CD4-positive, alpha-beta memory T cell (primary cell): ENCODE measurements at regions of chr1 and their contacts with region 1.

Region 1: DNA sequence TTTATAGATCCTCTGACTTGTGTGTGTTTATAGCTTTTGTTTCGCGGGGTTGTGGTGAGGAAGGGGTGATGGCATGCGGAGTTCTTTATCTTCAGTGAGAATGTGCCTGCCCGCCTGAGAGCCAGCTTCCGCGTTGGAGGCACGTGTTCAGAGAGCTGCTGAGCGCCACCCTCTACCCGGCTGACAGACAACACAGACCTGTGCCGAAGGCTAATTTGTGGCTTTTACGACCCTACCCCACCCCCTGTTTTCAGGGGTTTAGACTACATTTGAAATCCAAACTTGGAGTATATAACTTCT is 14.4 kb upstream of the CD101 start:
- DNase-seq: peak; percentile 64 to 78 (median 74)
- H3K4me3 ChIP-seq: peak overlapping the region; percentile 44 to 59
- H3K4me3 Mint-ChIP-seq: peak overlapping the region; percentile 83 to 94 (median 88)
- H3K27ac ChIP-seq: peak overlapping the region; percentile 51
- H3K27ac Mint-ChIP-seq: peak overlapping the region; percentile 74 to 98 (median 95)
- H3K4me1 ChIP-seq: peaks cover 34% of the 10 kb centered on the region
- H3K4me1 Mint-ChIP-seq: peaks cover 25 to 42% (median 31%) of the 10 kb centered on the region in 4 donors
- H3K27me3 ChIP-seq: no peaks in the 10 kb centered on the region
- H3K27me3 Mint-ChIP-seq: no peaks in the 10 kb centered on the region

Region 2: DNA sequence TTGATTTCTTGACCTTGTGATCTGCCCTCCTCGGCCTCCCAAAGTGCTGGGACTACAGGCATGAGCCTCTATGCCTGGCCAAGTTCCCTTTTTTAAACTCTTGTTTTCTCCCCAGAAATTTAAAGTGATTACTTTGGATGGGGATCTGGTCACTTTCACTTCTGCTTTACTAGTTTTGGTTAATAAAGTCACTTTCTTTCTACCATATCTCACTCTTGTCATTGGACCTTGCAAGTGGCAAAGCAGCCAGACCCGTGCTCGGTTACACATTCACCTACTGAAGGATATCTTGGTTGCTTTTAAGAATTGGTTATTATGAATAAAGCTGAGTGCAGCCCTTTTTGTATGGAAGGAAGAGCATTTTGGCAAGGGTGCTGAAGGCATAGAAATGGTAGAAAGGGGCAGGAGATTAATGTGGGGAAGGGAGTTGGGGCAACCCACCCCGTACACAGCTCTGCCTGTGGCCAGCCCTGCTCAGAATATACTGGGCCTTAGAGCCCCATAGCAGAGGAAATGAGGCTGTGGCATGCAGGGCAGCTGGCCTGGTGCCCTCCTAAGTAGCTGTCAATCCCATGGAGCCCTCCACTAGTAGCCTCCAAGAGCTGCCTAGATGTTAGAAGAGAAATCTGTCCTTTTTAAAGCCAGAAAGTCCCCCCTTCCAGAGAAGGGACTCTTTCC is 192.3 kb before region 1 on chr1:
- CTCF ChIA-PET with region 1: no interaction called
- POLR2A ChIA-PET with region 1: interaction called, 11 read pairs
- intact Hi-C with region 1: no loop called
- DNase-seq: no peak
- H3K4me3 ChIP-seq: no peak overlapping the region
- H3K4me3 Mint-ChIP-seq: no peak overlapping the region
- H3K27ac ChIP-seq: no peak overlapping the region
- H3K27ac Mint-ChIP-seq: peak overlapping the region in 2 of 7 donors; percentile 3 to 71
- H3K4me1 ChIP-seq: peaks cover 57% of the 10 kb centered on the region
- H3K4me1 Mint-ChIP-seq: peaks cover 36 to 74% (median 58%) of the 10 kb centered on the region in 4 donors
- H3K27me3 ChIP-seq: no peaks in the 10 kb centered on the region
- H3K27me3 Mint-ChIP-seq: no peaks in the 10 kb centered on the region

Region 3: GRCh38 chr1:116962987-116963639 is 24.1 kb before region 1 on chr1:
- CTCF ChIA-PET with region 1: interaction called, 3 read pairs
- POLR2A ChIA-PET with region 1: interaction called, 11 read pairs
- intact Hi-C with region 1: no loop called
- DNase-seq: peak in 4 of 5 donors; percentile 19 to 40 (median 28)
- H3K4me3 ChIP-seq: no peak overlapping the region
- H3K4me3 Mint-ChIP-seq: no peak overlapping the region
- H3K27ac ChIP-seq: no peak overlapping the region
- H3K27ac Mint-ChIP-seq: no peak overlapping the region
- H3K4me1 ChIP-seq: peaks cover 18% of the 10 kb centered on the region
- H3K4me1 Mint-ChIP-seq: peaks cover 0 to 4% (median 0%) of the 10 kb centered on the region in 4 donors
- H3K27me3 ChIP-seq: no peaks in the 10 kb centered on the region
- H3K27me3 Mint-ChIP-seq: peaks cover 0 to 2% of the 10 kb centered on the region in 2 donors

Region 4: GRCh38 chr1:117001254-117001927 is 14.2 kb after region 1 on chr1 and contains the start of gene CD101:
- CTCF ChIA-PET with region 1: interaction called, 17 read pairs
- POLR2A ChIA-PET with region 1: interaction called, 31 read pairs
- intact Hi-C with region 1: no loop called
- DNase-seq: peak in 2 of 5 donors; percentile 16 to 17
- H3K4me3 ChIP-seq: no peak within 1 kb of the TSS
- H3K4me3 Mint-ChIP-seq: peak within 1 kb of the TSS in 7 of 8 donors; percentile 4 to 69 (median 64)
- H3K27ac ChIP-seq: no peak within 1 kb of the TSS
- H3K27ac Mint-ChIP-seq: peak within 1 kb of the TSS; percentile 28 to 91 (median 76)
- H3K4me1 ChIP-seq: peaks cover 10% of the 10 kb centered on the region
- H3K4me1 Mint-ChIP-seq: peaks cover 20 to 31% (median 29%) of the 10 kb centered on the region in 4 donors
- H3K27me3 ChIP-seq: no peaks in the 10 kb centered on the region
- H3K27me3 Mint-ChIP-seq: no peaks in the 10 kb centered on the region
- total RNA-seq, gene CD101: 2.1 to 2.6 TPM

Region 5: DNA sequence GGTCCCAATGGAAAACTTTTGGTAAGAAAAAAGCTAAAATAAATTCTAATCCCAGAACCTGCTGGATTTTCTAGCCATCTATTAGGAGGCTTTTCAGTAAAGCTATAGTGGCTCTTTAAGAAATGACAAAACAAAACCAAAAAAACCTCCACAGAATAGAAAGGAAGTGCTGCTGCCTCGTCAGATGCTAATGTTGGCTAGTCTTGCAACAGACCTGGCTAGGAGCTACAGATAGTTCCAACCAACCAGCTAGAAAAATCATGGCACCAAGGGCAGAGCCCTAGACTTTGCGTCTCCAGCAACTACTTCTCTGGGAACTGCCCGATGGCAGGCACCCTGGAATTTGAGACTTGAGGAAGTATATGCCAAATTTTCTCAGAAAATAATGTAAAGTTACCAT is 21.9 kb after region 1 on chr1:
- CTCF ChIA-PET with region 1: interaction called, 17 read pairs
- POLR2A ChIA-PET with region 1: interaction called, 24 read pairs
- intact Hi-C with region 1: no loop called
- DNase-seq: peak in 4 of 5 donors; percentile 21 to 27 (median 22)
- H3K4me3 ChIP-seq: no peak overlapping the region
- H3K4me3 Mint-ChIP-seq: peak overlapping the region in 7 of 8 donors; percentile 2 to 52 (median 41)
- H3K27ac ChIP-seq: no peak overlapping the region
- H3K27ac Mint-ChIP-seq: peak overlapping the region in 5 of 7 donors; percentile 38 to 83 (median 75)
- H3K4me1 ChIP-seq: peaks cover 18% of the 10 kb centered on the region
- H3K4me1 Mint-ChIP-seq: peaks cover 15 to 24% (median 22%) of the 10 kb centered on the region in 4 donors
- H3K27me3 ChIP-seq: no peaks in the 10 kb centered on the region
- H3K27me3 Mint-ChIP-seq: no peaks in the 10 kb centered on the region

Region 6: GRCh38 chr1:117051224-117052064 is 64.2 kb after region 1 on chr1:
- CTCF ChIA-PET with region 1: interaction called, 12 read pairs
- POLR2A ChIA-PET with region 1: interaction called, 18 read pairs
- intact Hi-C with region 1: loop called (anchors 2 kb)
- DNase-seq: peak in 4 of 5 donors; percentile 17 to 32 (median 26)
- H3K4me3 ChIP-seq: peak overlapping the region; percentile 52 to 53
- H3K4me3 Mint-ChIP-seq: peak overlapping the region; percentile 83 to 93 (median 88)
- H3K27ac ChIP-seq: peak overlapping the region; percentile 40
- H3K27ac Mint-ChIP-seq: peak overlapping the region; percentile 42 to 97 (median 95)
- H3K4me1 ChIP-seq: peaks cover 32% of the 10 kb centered on the region
- H3K4me1 Mint-ChIP-seq: peaks cover 21 to 33% (median 28%) of the 10 kb centered on the region in 4 donors
- H3K27me3 ChIP-seq: no peaks in the 10 kb centered on the region
- H3K27me3 Mint-ChIP-seq: no peaks in the 10 kb centered on the region

Region 7: GRCh38 chr1:117321680-117322609 is 334.7 kb after region 1 on chr1:
- CTCF ChIA-PET with region 1: no interaction called
- POLR2A ChIA-PET with region 1: no interaction called
- intact Hi-C with region 1: no loop called
- DNase-seq: no peak
- H3K4me3 ChIP-seq: no peak overlapping the region
- H3K4me3 Mint-ChIP-seq: no peak overlapping the region
- H3K27ac ChIP-seq: no peak overlapping the region
- H3K27ac Mint-ChIP-seq: no peak overlapping the region
- H3K4me1 ChIP-seq: no peaks in the 10 kb centered on the region
- H3K4me1 Mint-ChIP-seq: no peaks in the 10 kb centered on the region
- H3K27me3 ChIP-seq: peaks cover 3% of the 10 kb centered on the region
- H3K27me3 Mint-ChIP-seq: peaks cover 9 to 12% of the 10 kb centered on the region in 2 donors